BJ (cell line): ENCODE measurements at regions of chr3 and their contacts with region 1.

Region 1: GRCh38 chr3:8663177-8664061 is 18.8 kb upstream of the SSUH2 start:
- DNase-seq: no peak
- H3K4me3 ChIP-seq: no peak overlapping the region
- H3K27me3 ChIP-seq: no peaks in the 10 kb centered on the region
- CTCF ChIP-seq: peak; percentile 75

Region 2: GRCh38 chr3:8650583-8651416 is 12.6 kb before region 1 on chr3:
- CTCF ChIA-PET with region 1: interaction called, 11 read pairs
- POLR2A ChIA-PET with region 1: no interaction called
- DNase-seq: no peak
- H3K4me3 ChIP-seq: no peak overlapping the region
- H3K27me3 ChIP-seq: peaks cover 5% of the 10 kb centered on the region; the same call in 1 of the 2 replicates
- CTCF ChIP-seq: no peak

Region 3: GRCh38 chr3:9491506-9491905 is 828.1 kb after region 1 on chr3:
- CTCF ChIA-PET with region 1: no interaction called
- POLR2A ChIA-PET with region 1: no interaction called
- DNase-seq: no peak
- H3K4me3 ChIP-seq: no peak overlapping the region
- H3K27me3 ChIP-seq: no peaks in the 10 kb centered on the region
- CTCF ChIP-seq: no peak